MCF 10A (cell line): ENCODE measurements at regions of chr4 and their contacts with region 1.

Region 1: GRCh38 chr4:37826295-37827029 is at the start of gene PGM2:
- DNase-seq: peak; percentile 87
- H3K4me3 Mint-ChIP-seq: peak within 1 kb of the TSS; percentile 88
- H3K27ac Mint-ChIP-seq: peak within 1 kb of the TSS; percentile 89
- H3K4me1 Mint-ChIP-seq: peaks cover 38% of the 10 kb centered on the region
- H3K27me3 Mint-ChIP-seq: no peaks in the 10 kb centered on the region
- CTCF ChIP-seq: no peak
- total RNA-seq, gene PGM2: 23.9 and 27.9 TPM in 2 replicates

Region 2: GRCh38 chr4:37686373-37687193 is 139.9 kb before region 1 on chr4 and contains the start of gene RELL1:
- CTCF ChIA-PET with region 1: no interaction called
- POLR2A ChIA-PET with region 1: interaction called, 17 read pairs
- intact Hi-C with region 1: no loop called
- DNase-seq: peak; percentile 99
- H3K4me3 Mint-ChIP-seq: peak within 1 kb of the TSS; percentile 85
- H3K27ac Mint-ChIP-seq: peak within 1 kb of the TSS; percentile 92
- H3K4me1 Mint-ChIP-seq: peaks cover 29% of the 10 kb centered on the region
- H3K27me3 Mint-ChIP-seq: no peaks in the 10 kb centered on the region
- CTCF ChIP-seq: no peak
- total RNA-seq, gene RELL1: 28.6 and 34.0 TPM in 2 replicates

Region 3: GRCh38 chr4:37812710-37813109 is 13.8 kb before region 1 on chr4:
- CTCF ChIA-PET with region 1: interaction called, 7 read pairs
- POLR2A ChIA-PET with region 1: interaction called, 13 read pairs
- intact Hi-C with region 1: no loop called
- DNase-seq: peak; percentile 79
- H3K4me3 Mint-ChIP-seq: no peak overlapping the region
- H3K27ac Mint-ChIP-seq: peak overlapping the region; percentile 21
- H3K4me1 Mint-ChIP-seq: peaks cover 9% of the 10 kb centered on the region
- H3K27me3 Mint-ChIP-seq: no peaks in the 10 kb centered on the region
- CTCF ChIP-seq: no peak

Region 4: DNA sequence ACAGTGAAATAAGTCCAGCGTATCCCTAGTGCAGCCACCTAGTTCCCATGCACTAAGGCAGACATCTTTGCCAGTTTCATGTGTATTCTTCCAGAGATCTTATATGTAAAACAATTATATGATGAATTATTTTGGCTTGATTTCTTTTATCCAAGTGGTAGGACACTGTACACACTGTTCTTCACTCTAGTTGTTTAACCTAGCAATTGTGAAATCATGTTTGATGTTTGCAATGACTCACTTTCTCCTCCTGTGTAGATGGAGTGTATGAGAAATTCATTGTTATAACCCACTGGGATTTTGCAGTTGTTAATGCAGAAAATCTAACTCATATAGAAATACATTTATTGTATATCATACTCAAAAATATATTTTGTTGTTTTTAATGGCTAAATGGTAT is 46.9 kb after region 1 on chr4:
- CTCF ChIA-PET with region 1: interaction called, 3 read pairs
- POLR2A ChIA-PET with region 1: interaction called, 34 read pairs
- intact Hi-C with region 1: no loop called
- DNase-seq: peak; percentile 86
- H3K4me3 Mint-ChIP-seq: peak overlapping the region; percentile 21
- H3K27ac Mint-ChIP-seq: peak overlapping the region; percentile 83
- H3K4me1 Mint-ChIP-seq: peaks cover 14% of the 10 kb centered on the region
- H3K27me3 Mint-ChIP-seq: no peaks in the 10 kb centered on the region
- CTCF ChIP-seq: no peak

Region 5: DNA sequence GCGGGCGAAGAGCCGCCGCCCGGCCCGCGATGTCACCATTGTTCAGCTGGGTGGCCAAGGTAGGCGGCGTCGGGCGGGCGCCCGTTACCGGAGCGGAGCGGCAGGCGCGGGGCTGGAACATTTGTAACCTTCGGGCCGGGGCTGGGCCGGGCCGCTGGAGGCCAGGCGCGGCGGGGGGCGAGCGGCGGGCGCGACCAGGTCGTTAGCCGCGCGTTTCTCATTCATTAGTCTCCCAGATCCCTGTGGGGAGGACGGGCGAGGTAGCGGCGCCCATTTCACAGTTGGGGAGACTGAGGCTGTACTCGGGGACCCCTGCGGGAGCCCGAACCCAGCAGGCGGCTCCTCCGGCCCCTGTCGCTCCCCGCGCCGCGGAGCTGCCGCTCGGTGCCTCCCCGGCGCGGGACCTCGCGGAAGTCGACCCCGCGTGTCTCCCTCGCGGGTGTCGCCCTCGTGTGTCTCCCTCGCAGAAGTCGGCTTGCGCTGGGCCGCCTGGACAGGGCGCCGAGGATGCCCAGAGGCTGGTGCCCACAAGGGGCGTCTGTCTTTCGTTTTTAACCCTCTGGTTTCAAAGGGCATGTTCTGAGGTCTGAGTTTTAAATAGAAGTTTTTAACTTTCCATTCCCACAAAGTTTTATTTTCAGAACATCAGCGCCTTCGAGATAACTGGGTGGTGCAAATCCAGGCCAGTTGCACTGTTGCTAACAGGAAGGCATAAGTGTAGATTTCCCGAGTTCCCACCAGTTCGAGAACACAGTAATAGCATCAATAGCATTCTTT is 151.2 kb after region 1 on chr4:
- CTCF ChIA-PET with region 1: interaction called, 6 read pairs
- POLR2A ChIA-PET with region 1: interaction called, 22 read pairs
- intact Hi-C with region 1: loop called (anchors 2 kb)
- DNase-seq: peak; percentile 57
- H3K4me3 Mint-ChIP-seq: peak overlapping the region; percentile 77
- H3K27ac Mint-ChIP-seq: no peak overlapping the region
- H3K4me1 Mint-ChIP-seq: peaks cover 9% of the 10 kb centered on the region
- H3K27me3 Mint-ChIP-seq: no peaks in the 10 kb centered on the region
- CTCF ChIP-seq: peak; percentile 52